CD8-positive, alpha-beta T cell (primary cell): ENCODE measurements at regions of chr16 and their contacts with region 1.

Region 1: DNA sequence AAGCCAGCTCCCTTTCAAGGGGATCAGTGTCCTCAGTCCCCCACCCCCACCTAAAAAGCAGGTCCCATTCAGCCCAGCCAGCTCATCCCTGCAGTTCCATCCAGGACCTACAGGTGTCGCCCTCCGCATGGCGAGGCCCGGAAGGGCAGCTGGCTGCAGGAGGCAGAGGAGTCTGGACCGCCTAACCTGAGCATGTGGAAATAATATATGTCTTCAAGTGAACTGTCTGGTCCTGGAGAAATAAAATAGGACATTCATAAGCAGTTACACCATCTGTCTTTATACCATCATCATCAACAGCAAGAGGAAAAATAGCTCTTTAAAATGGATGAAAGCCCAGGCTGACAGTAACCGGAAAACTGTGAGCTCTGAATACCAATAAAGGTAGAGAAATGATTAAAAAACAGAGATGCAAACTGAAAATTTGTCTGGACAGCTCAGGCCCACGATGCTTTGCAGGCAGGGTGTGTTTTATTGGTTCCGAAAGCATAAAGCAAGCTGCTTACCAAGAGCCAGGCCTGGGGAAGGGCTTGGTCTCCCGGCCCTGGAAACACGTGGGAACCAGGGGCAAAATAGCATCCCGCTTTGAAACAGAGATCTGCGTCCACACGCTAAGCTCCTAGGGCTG is 215.2 kb downstream of the ZFHX3 start:
- DNase-seq: peak; percentile 34 to 73 (median 62)
- ATAC-seq: peak; percentile 40
- H3K4me3 ChIP-seq: no peak overlapping the region
- H3K4me3 Mint-ChIP-seq: no peak overlapping the region
- H3K27ac ChIP-seq: no peak overlapping the region
- H3K27ac Mint-ChIP-seq: no peak overlapping the region
- H3K4me1 ChIP-seq: no peaks in the 10 kb centered on the region
- H3K4me1 Mint-ChIP-seq: no peaks in the 10 kb centered on the region
- H3K27me3 ChIP-seq: no peaks in the 10 kb centered on the region
- H3K27me3 Mint-ChIP-seq: no peaks in the 10 kb centered on the region
- CTCF ChIP-seq: peak; percentile 85

Region 2: DNA sequence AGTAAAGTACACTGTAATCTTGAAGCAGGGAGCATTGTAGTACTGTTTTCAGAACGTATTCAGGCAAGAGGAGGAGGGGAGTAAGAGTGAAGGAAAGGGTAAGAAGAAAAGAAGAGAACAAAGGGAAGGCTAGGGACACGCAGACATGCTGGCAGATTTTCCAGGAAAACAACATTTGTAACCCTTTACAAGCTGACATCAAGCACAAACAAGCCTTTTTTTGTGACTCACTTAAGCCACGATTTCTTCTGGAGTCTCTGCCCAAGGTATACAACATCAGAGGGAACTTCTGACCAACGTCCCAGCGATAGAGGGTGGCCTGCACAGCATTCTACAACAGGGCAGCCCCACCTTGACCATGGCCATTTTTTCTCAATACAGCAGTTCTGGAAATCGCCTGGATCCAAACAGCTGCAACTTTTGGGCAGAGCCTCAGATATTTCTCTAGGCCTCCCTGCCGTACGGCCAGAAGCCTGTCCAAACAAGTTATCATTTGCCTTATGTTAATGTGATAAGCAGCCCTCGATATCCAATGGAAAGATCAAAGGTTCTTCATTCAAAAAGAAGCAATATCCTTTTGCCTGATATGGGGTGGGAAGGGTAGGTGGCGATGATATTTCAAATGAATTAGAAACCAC is 32.1 kb before region 1 on chr16:
- CTCF ChIA-PET with region 1: interaction called, 10 read pairs
- POLR2A ChIA-PET with region 1: no interaction called
- intact Hi-C with region 1: no loop called
- DNase-seq: no peak
- ATAC-seq: no peak
- H3K4me3 ChIP-seq: no peak overlapping the region
- H3K4me3 Mint-ChIP-seq: no peak overlapping the region
- H3K27ac ChIP-seq: no peak overlapping the region
- H3K27ac Mint-ChIP-seq: no peak overlapping the region
- H3K4me1 ChIP-seq: no peaks in the 10 kb centered on the region
- H3K4me1 Mint-ChIP-seq: no peaks in the 10 kb centered on the region
- H3K27me3 ChIP-seq: no peaks in the 10 kb centered on the region
- H3K27me3 Mint-ChIP-seq: no peaks in the 10 kb centered on the region
- CTCF ChIP-seq: no peak

Region 3: GRCh38 chr16:72821185-72821950 is 11.4 kb before region 1 on chr16:
- CTCF ChIA-PET with region 1: interaction called, 15 read pairs
- POLR2A ChIA-PET with region 1: no interaction called
- intact Hi-C with region 1: no loop called
- DNase-seq: no peak
- ATAC-seq: no peak
- H3K4me3 ChIP-seq: no peak overlapping the region
- H3K4me3 Mint-ChIP-seq: no peak overlapping the region
- H3K27ac ChIP-seq: no peak overlapping the region
- H3K27ac Mint-ChIP-seq: no peak overlapping the region
- H3K4me1 ChIP-seq: no peaks in the 10 kb centered on the region
- H3K4me1 Mint-ChIP-seq: no peaks in the 10 kb centered on the region
- H3K27me3 ChIP-seq: no peaks in the 10 kb centered on the region
- H3K27me3 Mint-ChIP-seq: no peaks in the 10 kb centered on the region
- CTCF ChIP-seq: no peak

Region 4: DNA sequence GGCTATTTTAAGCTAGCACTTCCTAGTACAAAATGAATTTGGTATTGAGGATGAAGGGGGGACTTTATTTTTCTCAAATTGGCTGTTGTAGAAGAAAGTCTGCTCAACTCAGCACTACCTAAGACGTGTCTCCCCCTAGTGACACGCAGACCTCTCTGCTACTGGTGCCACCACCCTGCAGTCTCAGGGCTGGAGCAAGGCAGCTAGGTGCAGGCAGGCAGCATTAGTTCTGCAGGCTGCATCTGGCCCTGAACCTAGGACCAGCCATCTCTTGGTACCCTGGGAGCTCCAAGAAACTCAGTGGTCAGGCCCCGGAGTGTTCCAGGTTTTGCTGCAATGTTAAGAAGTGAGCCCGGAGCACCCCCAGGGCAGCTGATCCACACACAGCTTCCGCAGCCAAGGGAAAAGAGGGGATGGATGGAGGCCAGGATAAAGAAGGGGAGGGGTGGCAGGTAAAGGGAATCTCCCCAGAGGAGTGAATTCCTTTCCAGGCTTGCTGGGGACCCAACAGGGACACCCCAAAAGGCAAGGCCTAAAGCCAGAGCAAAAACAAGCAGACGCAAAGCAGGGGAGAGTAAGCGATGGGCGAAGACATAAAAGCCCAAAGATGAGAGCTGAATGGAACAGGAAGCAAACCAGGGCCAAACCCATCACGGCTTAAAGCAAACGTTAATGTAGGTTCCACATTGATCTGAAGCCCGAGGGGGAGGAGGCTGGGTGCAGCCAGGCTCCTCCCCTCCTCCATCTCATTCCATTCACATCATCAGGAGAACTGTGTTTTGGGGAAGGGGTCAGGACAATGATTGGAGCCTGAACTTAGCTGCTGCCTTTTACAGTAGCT is 14.7 kb after region 1 on chr16:
- CTCF ChIA-PET with region 1: interaction called, 12 read pairs
- POLR2A ChIA-PET with region 1: no interaction called
- intact Hi-C with region 1: no loop called
- DNase-seq: no peak
- ATAC-seq: no peak
- H3K4me3 ChIP-seq: no peak overlapping the region
- H3K4me3 Mint-ChIP-seq: no peak overlapping the region
- H3K27ac ChIP-seq: no peak overlapping the region
- H3K27ac Mint-ChIP-seq: no peak overlapping the region
- H3K4me1 ChIP-seq: no peaks in the 10 kb centered on the region
- H3K4me1 Mint-ChIP-seq: peaks cover 9% of the 10 kb centered on the region
- H3K27me3 ChIP-seq: no peaks in the 10 kb centered on the region
- H3K27me3 Mint-ChIP-seq: peaks cover 6% of the 10 kb centered on the region
- CTCF ChIP-seq: no peak

Region 5: DNA sequence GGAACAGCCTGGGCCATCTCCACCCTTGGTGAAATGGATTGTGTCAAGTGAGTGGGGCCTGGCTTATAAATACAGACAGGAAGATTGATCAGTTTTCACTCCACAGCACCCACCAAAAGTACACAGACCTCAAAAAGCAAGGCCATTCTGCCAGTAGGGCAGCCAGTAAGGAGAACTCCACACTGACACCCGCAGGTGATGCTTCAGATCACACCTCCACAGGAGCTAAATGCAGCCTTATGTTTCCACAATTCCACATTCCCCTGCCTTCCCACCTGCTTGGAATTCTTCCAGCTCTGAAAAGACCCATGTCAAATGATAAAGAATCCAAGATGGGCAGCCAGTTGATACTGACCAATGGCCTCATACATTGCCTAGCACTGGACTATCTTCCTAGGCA is 24.1 kb after region 1 on chr16:
- CTCF ChIA-PET with region 1: interaction called, 12 read pairs
- POLR2A ChIA-PET with region 1: no interaction called
- intact Hi-C with region 1: no loop called
- DNase-seq: peak in 1 of 9 experiments; percentile 14
- ATAC-seq: no peak
- H3K4me3 ChIP-seq: no peak overlapping the region
- H3K4me3 Mint-ChIP-seq: no peak overlapping the region
- H3K27ac ChIP-seq: no peak overlapping the region
- H3K27ac Mint-ChIP-seq: no peak overlapping the region
- H3K4me1 ChIP-seq: no peaks in the 10 kb centered on the region
- H3K4me1 Mint-ChIP-seq: no peaks in the 10 kb centered on the region
- H3K27me3 ChIP-seq: no peaks in the 10 kb centered on the region
- H3K27me3 Mint-ChIP-seq: peaks cover 5% of the 10 kb centered on the region
- CTCF ChIP-seq: peak; percentile 14

Region 6: GRCh38 chr16:73956587-73957494 is 1124.1 kb after region 1 on chr16:
- CTCF ChIA-PET with region 1: no interaction called
- POLR2A ChIA-PET with region 1: no interaction called
- intact Hi-C with region 1: loop called (anchors 5 to 10 kb)
- DNase-seq: peak in 4 of 9 experiments; percentile 15 to 47 (median 20)
- ATAC-seq: no peak
- H3K4me3 ChIP-seq: no peak overlapping the region
- H3K4me3 Mint-ChIP-seq: no peak overlapping the region
- H3K27ac ChIP-seq: no peak overlapping the region
- H3K27ac Mint-ChIP-seq: no peak overlapping the region
- H3K4me1 ChIP-seq: no peaks in the 10 kb centered on the region
- H3K4me1 Mint-ChIP-seq: no peaks in the 10 kb centered on the region
- H3K27me3 ChIP-seq: no peaks in the 10 kb centered on the region
- H3K27me3 Mint-ChIP-seq: peaks cover 2% of the 10 kb centered on the region
- CTCF ChIP-seq: peak; percentile 61

Region 7: DNA sequence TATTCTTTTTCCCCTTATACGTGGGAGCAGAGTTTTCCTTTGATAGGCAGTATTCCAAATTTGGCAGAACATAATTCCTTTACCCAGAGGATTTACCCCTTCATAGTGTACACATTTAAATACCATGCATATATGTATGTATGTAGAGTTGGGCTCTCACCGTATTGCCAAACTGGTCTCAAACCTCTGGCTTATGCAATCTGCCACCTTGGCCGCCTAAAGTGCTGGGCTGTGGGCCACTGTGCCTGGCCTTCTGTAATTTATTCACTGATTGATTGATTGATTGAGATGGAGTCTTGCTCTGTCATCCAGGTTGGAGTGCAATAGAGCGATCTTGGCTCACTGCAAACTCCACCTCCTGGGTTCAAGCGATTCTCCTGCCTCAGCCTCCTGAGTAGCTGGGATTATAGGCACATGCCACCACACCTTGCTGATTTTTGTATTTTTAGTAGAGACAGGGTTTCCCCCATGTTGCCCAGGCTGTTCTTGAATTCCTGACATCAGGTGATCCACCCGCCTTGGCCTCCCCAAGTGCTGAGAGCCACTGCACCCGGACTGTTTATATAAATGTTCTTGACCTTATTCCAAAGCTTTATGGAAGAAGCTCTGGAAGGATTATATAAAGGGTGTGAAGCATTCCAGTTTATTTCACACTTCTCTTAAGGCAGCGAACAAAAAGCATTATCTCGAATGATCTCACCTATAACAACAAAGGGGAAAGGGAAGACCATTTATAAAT is 1759.3 kb after region 1 on chr16:
- CTCF ChIA-PET with region 1: no interaction called
- POLR2A ChIA-PET with region 1: no interaction called
- intact Hi-C with region 1: no loop called
- DNase-seq: no peak
- ATAC-seq: no peak
- H3K4me3 ChIP-seq: no peak overlapping the region
- H3K4me3 Mint-ChIP-seq: no peak overlapping the region
- H3K27ac ChIP-seq: no peak overlapping the region
- H3K27ac Mint-ChIP-seq: peak overlapping the region; percentile 14
- H3K4me1 ChIP-seq: peaks cover 37% of the 10 kb centered on the region
- H3K4me1 Mint-ChIP-seq: peaks cover 60% of the 10 kb centered on the region
- H3K27me3 ChIP-seq: no peaks in the 10 kb centered on the region
- H3K27me3 Mint-ChIP-seq: no peaks in the 10 kb centered on the region
- CTCF ChIP-seq: no peak